ENCODE measurements at regions of chr9 and their contacts with region 1.

Region 1: GRCh38 chr9:112717661-112718341 is at the start of gene INIP:
- DNase-seq: peak; percentile 98 to 99
- ATAC-seq: peak; percentile 97
- H3K4me3 ChIP-seq: peak within 1 kb of the TSS; percentile 62 to 79
- H3K27ac ChIP-seq: peak within 1 kb of the TSS in 1 of 2 donors; percentile 72
- H3K4me1 ChIP-seq: no peaks in the 10 kb centered on the region
- H3K27me3 ChIP-seq: no peaks in the 10 kb centered on the region
- total RNA-seq, gene INIP: 14.1 to 19.9 TPM

Region 2: GRCh38 chr9:112379177-112380101 is 338.4 kb before region 1 on chr9:
- intact Hi-C with region 1: loop called in 1 of 2 experiments (anchors 10 kb)
- DNase-seq: peak; percentile 100
- ATAC-seq: peak; percentile 99
- H3K4me3 ChIP-seq: peak overlapping the region; percentile 50 to 60
- H3K27ac ChIP-seq: peak overlapping the region; percentile 45 to 62
- H3K4me1 ChIP-seq: peaks cover 0 to 3% of the 10 kb centered on the region in 2 donors
- H3K27me3 ChIP-seq: no peaks in the 10 kb centered on the region

Region 3: GRCh38 chr9:112486221-112487007 is 231.4 kb before region 1 on chr9 and contains the start of gene KIAA1958:
- intact Hi-C with region 1: loop called in 1 of 2 experiments (anchors 10 kb)
- DNase-seq: peak; percentile 86 to 94
- ATAC-seq: peak; percentile 84
- H3K4me3 ChIP-seq: peak within 1 kb of the TSS; percentile 92 to 93
- H3K27ac ChIP-seq: peak within 1 kb of the TSS in 1 of 2 donors; percentile 23
- H3K4me1 ChIP-seq: peaks cover 0 to 2% of the 10 kb centered on the region in 2 donors
- H3K27me3 ChIP-seq: no peaks in the 10 kb centered on the region
- total RNA-seq, gene KIAA1958: 6.2 to 7.9 TPM

Region 4: DNA sequence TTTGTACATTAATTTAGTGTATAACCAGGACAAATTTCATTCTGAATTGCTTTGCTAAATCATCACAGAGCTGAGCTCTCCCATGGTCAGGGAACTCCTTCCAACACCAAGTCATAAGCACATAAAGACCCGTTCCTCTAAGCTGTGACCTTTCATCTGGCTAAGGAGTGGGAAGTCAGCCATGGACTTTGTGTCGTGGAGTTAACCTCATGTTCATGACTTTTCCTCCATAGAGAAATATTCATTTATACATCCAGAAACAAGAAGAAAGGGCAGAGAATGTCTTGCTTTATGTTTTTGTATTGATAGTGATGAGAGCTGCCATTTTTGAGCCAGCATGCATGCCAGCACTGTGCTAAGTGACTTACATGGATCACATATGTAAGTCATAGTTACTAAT is 97.4 kb before region 1 on chr9:
- intact Hi-C with region 1: no loop called
- DNase-seq: no peak
- ATAC-seq: no peak
- H3K4me3 ChIP-seq: no peak overlapping the region
- H3K27ac ChIP-seq: no peak overlapping the region
- H3K4me1 ChIP-seq: peaks cover 0 to 3% of the 10 kb centered on the region in 2 donors
- H3K27me3 ChIP-seq: no peaks in the 10 kb centered on the region

Region 5: DNA sequence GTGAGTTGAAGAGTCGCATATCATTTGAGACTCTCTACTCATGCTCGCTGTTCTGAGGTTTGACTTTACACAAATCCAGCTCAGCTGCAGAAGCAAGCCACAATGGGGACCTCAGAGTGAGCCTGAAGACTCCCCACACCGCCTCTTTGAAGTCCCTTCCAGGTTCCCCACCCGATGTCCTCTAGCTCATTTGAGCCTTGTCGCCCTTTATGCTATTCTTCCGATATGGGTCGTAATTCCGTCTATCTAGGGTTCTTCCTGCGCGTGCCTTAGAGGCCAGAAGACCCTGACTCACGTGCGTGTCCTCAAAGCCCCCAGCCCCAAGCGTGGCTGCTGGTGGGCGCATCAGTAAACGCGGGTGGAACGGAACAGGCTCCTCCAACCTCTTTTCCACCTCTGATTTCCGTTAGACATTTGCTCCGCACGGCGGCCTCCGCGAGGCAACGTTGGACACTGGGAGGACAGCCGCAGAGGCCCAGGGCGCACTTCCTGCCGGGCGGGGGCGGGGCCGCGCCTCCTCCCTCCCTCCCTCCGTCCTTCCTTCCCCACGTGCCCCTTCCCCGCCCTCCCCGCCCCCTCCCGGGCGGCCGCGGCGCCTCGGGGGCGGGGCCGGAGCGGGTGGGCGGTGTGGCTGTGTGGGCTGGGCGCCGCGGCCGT is 32.4 kb after region 1 on chr9 and contains the start of gene SNX30:
- intact Hi-C with region 1: loop called in 1 of 2 experiments (anchors 2 kb)
- DNase-seq: peak; percentile 94 to 96
- ATAC-seq: peak; percentile 96
- H3K4me3 ChIP-seq: peak within 1 kb of the TSS; percentile 89
- H3K27ac ChIP-seq: peak within 1 kb of the TSS in 1 of 2 donors; percentile 93
- H3K4me1 ChIP-seq: peaks cover 0 to 1% of the 10 kb centered on the region in 2 donors
- H3K27me3 ChIP-seq: no peaks in the 10 kb centered on the region
- total RNA-seq, gene SNX30: 9.1 to 11.3 TPM

Region 6: DNA sequence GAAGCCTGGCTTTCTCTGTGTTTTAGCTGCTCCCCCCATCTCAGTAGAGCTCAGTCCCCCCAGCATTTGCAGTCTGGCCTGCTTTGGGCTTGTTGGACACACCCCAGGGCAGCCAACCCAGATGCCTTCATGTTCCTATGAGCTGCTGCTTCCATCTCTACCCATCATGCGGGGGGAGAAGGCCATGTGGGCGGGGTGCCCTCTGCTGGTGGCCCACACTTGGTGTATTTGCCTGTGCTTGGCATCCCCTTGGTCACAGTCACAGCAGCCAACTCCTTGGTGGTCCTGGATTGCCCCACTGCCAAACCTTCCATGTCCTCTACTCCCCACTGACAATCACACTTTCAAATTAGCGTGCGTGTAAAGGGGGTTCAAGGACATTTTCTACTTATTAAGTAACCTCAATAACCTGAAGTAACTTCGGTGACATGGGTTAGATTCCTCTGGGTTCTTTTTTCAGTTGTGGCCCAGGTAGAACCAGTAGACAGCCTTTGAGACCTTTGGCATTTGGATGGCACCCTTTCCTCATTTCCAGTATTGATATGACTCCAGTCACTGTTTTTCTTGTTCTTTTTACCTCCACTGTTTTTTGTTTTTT is 75.5 kb after region 1 on chr9:
- intact Hi-C with region 1: loop called in 1 of 2 experiments (anchors 5 kb)
- DNase-seq: peak; percentile 76 to 90
- ATAC-seq: peak; percentile 64
- H3K4me3 ChIP-seq: no peak overlapping the region
- H3K27ac ChIP-seq: no peak overlapping the region
- H3K4me1 ChIP-seq: peaks cover 0 to 4% of the 10 kb centered on the region in 2 donors
- H3K27me3 ChIP-seq: no peaks in the 10 kb centered on the region

Region 7: GRCh38 chr9:112819635-112820496 is 102.1 kb after region 1 on chr9:
- intact Hi-C with region 1: loop called in 1 of 2 experiments (anchors 5 kb)
- DNase-seq: peak; percentile 68 to 76
- ATAC-seq: peak; percentile 85
- H3K4me3 ChIP-seq: no peak overlapping the region
- H3K27ac ChIP-seq: no peak overlapping the region
- H3K4me1 ChIP-seq: peaks cover 0 to 3% of the 10 kb centered on the region in 2 donors
- H3K27me3 ChIP-seq: no peaks in the 10 kb centered on the region

Measured in aorta (tissue), 5 donors.